Posterior cingulate gyrus (tissue), 11 donors: ENCODE measurements at regions of chr20 and their contacts with region 1.

Region 1: GRCh38 chr20:7841971-7842310 is 98.3 kb downstream of the HAO1 start:
- DNase-seq: no peak

Region 2: DNA sequence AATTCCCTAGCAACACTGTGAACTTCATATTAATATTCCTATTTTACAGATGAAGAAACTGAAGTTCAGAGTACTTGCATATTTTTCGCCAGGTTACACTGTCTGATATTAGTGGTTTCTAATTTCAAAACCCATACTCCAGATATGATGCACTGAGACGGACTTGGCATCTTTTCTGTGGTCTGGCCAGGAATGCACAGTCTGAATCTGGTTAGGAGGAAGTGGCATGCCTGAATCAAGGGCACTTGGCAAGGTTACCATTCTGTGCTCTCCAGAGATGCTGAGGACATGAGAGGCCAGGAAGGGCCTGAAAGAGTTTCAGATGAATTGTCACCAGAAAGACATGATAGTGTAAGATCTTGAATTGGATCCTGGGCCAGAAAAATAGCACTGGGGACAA is 51.8 kb before region 1 on chr20:
- intact Hi-C with region 1: loop called (anchors 10 kb)
- DNase-seq: no peak